ENCODE measurements at regions of chr4 and their contacts with region 1.

Region 1: DNA sequence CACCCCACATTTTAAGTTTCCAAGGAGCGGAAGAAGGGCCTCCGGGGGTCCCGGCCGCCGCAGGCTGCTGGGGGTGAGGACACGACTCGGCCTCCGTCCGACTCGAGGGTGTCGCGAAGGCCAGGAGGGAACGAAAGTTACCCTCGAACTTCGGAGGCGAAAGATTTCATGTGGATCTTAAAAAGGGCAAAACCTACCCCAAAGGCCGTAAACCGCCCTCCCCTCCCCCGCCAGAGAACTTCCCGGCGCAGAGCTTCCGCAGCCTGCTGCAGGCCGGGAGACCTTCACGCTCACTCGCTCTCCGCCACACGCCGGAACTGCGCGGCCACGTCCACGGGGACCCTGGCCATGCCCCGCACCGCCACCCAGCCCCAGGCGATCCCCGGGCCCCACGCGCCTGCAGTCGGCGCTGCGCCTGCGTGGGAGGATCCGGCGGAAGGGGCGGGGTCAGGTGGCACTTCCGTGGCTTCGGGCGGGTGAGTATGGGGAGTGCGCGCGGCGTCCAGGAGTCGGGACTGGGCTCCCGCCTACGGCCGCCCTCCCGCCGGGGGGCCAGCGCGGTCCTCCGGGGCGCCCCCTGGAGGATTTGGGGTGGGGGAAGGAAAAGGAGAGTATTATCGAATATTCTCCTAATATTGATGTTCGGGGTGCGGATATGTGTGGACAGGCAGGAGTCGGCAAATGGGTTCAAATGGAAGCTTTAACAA is at the start of gene MMAA:
- DNase-seq: peak; percentile 97
- total RNA-seq, gene MMAA: 9.9 TPM

Region 2: DNA sequence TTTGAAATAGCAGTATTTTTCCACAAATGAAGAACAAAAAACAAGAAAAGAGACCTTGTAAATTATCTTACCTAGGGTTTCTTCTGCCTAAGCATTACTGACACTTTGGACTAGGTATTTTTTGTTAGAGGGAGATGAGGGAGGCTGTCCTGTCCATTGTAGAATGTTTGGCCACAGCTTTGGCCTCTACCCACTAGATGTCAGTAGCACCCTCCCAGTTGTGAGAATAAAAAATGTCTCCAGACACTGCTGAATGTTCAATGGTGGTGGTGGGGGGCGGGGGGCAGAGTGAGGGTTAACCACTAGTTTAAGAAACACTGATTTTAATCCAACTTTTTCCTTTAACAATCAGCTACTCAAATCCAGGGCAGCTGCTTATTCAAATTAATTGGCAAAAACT is 464.5 kb before region 1 on chr4:
- intact Hi-C with region 1: loop called (anchors 5 kb)
- DNase-seq: no peak

Region 3: GRCh38 chr4:145216535-145216934 is 402.6 kb before region 1 on chr4:
- intact Hi-C with region 1: loop called (anchors 5 kb)
- DNase-seq: no peak

Region 4: GRCh38 chr4:145719752-145720624 is 100.9 kb after region 1 on chr4:
- intact Hi-C with region 1: no loop called
- DNase-seq: no peak

Region 5: DNA sequence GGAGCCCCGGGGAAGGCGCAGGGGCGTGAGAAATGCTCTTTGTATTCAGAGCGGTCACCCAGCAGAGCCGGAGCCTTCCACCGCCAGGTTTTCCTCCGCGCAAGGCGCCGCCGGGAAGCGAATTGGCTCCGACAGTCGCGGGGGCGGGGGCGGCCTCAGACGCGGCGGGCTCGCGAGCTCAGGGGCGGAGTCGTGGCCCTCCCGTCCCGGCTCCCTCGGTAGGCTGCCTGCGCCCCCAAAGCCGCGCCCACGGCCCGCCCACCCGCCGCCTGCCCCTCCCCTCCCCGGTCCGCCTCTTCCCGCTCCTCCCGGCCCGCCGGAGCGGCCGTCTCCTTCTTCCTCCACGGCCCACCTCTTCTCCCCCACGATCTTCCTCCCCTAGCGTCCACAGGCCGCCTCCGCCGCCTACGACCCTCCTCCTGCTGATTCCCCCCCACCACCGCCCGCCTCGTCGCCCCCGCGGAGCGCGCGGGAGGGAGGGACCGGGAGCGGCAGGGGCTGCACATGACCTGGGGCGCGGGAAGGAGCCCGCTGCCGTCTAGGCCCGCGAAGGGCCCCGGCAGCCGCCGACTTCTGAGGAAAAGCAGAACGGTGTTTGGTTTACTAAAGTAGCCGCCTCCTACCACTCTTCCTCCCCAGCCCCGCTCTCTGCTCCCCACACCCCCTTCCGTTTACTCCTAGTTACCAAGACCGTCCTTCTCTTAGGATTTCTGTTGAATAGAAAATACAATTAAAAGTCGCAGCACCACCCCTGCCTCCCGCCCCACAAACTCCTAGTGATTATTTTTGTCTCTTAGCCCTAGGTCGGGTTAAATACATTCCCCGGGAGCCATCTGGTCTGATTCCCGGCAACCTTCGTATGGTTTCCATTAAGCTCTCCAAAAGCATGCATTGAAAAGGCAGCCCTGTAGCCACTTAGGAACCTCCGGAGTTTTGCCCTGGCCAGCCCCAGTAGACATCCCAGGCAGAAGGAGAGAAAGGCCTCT is 114.1 kb after region 1 on chr4:
- intact Hi-C with region 1: loop called (anchors 1 kb)
- DNase-seq: peak; percentile 96

Region 6: GRCh38 chr4:145819853-145820181 is 200.7 kb after region 1 on chr4:
- intact Hi-C with region 1: loop called (anchors 5 kb)
- DNase-seq: no peak

Measured in cardiac septum (tissue), 1 donor.